ENCODE measurements at regions of chr6 and their contacts with region 1.

Region 1: GRCh38 chr6:150813319-150813992 is 52.0 kb upstream of the MTHFD1L start:
- DNase-seq: no peak
- H3K4me3 ChIP-seq: no peak overlapping the region
- CTCF ChIP-seq: no peak

Region 2: DNA sequence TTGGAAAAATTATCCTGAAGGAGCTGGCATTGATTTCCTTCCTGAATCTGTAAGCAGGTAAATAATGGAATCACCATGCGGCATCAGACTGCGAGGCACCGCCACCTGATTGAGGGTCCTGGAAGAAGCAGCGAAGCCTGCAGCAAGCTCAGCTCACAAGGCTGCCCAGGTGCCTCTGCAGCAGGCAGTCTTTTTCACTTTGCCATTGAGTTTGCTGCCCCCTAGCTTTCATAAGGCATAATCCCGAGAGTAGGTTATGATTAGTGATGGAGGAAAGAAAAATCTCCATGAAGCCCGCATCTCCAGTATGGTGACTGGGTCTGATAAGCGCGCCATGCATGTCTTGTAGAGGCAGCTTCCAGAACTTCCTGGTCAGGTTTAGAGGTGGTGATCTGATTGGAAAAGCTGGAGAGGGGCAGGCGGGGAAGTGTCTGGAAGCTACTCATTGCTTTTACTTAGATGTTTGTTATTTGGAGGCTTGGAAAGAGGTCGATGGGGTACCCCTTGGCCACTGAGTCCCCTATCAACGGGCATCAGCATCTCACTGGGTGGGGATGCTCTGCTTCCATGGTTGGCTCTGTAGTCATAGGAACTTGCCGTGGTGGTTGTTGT is 418.0 kb before region 1 on chr6:
- CTCF ChIA-PET with region 1: interaction called, 18 read pairs
- POLR2A ChIA-PET with region 1: no interaction called
- DNase-seq: no peak
- H3K4me3 ChIP-seq: no peak overlapping the region
- CTCF ChIP-seq: peak; percentile 62

Region 3: GRCh38 chr6:150685860-150686259 is 127.6 kb before region 1 on chr6:
- CTCF ChIA-PET with region 1: interaction called, 18 read pairs
- POLR2A ChIA-PET with region 1: no interaction called
- DNase-seq: no peak
- H3K4me3 ChIP-seq: no peak overlapping the region
- CTCF ChIP-seq: peak; percentile 51

Region 4: DNA sequence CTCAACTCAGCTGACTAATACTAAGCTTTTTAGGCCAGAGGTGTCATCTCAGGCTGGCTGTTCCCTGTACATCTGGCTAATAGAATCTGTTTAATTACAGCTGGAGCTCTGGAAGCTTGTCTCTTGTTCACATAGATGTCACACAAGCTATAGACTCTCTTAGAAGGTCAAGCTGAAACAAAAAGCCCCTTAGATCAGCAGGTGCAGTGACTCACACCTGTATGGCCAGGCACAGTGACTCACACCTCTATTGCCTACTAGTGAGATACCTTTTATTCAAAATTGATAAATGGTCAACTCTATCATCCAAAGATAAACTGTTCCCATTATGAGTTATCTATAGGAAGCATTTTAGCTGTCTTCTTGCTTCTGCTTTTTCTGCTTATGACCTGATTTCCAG is 22.2 kb after region 1 on chr6:
- CTCF ChIA-PET with region 1: interaction called, 34 read pairs
- POLR2A ChIA-PET with region 1: no interaction called
- DNase-seq: no peak
- H3K4me3 ChIP-seq: no peak overlapping the region
- CTCF ChIP-seq: no peak

Region 5: GRCh38 chr6:150876598-150876997 is 63.1 kb after region 1 on chr6:
- CTCF ChIA-PET with region 1: interaction called, 25 read pairs
- POLR2A ChIA-PET with region 1: no interaction called
- DNase-seq: no peak
- H3K4me3 ChIP-seq: no peak overlapping the region
- CTCF ChIP-seq: no peak

Region 6: GRCh38 chr6:151323791-151324487 is 510.5 kb after region 1 on chr6:
- CTCF ChIA-PET with region 1: interaction called, 41 read pairs
- POLR2A ChIA-PET with region 1: no interaction called
- DNase-seq: peak; percentile 71
- H3K4me3 ChIP-seq: no peak overlapping the region
- CTCF ChIP-seq: peak; percentile 96